Activated naive CD4-positive, alpha-beta T cell treated with anti-CD3 and anti-CD28 coated beads, Interleukin-2, amount 10 ng/mL, durations not matched to agents 7 days and 5 days (primary cell): ENCODE measurements at regions of chr11 and their contacts with region 1.

Region 1: GRCh38 chr11:116217006-116217405 is 555.8 kb downstream of the BUD13 start:
- DNase-seq: peak; percentile 34
- H3K4me3 Mint-ChIP-seq: no peak overlapping the region
- H3K27ac Mint-ChIP-seq: no peak overlapping the region
- H3K4me1 Mint-ChIP-seq: no peaks in the 10 kb centered on the region
- H3K27me3 Mint-ChIP-seq: no peaks in the 10 kb centered on the region

Region 2: GRCh38 chr11:116229236-116229970 is 12.4 kb after region 1 on chr11:
- CTCF ChIA-PET with region 1: interaction called, 10 read pairs
- DNase-seq: no peak
- H3K4me3 Mint-ChIP-seq: no peak overlapping the region
- H3K27ac Mint-ChIP-seq: no peak overlapping the region
- H3K4me1 Mint-ChIP-seq: no peaks in the 10 kb centered on the region
- H3K27me3 Mint-ChIP-seq: no peaks in the 10 kb centered on the region